ENCODE measurements at regions of chrX and their contacts with region 1.

Region 1: DNA sequence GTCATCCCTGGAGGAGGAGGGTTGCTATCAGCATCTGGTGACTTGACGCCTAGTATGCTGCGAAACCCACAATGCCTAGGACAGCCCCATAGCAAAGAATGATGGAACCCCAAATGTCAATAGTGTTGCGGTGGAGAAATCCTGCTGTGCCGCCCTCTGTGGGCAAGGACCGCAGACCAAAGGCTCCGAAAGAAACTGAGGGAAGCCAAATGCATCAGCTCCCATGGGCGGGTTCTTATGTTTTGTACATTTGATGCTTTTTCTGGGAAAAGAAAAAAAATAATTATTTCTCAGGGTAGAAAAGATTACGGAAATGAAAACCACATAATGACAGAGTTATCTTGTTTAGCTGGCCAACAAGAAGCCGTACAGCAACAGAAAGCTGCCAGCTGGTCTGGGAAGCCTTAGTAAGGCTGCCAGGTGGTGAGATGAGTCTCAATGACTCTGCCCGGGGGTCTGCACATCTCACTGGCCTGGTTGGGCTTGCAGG is 95.0 kb upstream of the TBL1X start:
- DNase-seq: no peak
- H3K4me3 ChIP-seq: no peak overlapping the region
- H3K27ac ChIP-seq: no peak overlapping the region
- H3K4me1 ChIP-seq: no peaks in the 10 kb centered on the region
- H3K27me3 ChIP-seq: no peaks in the 10 kb centered on the region
- CTCF ChIP-seq: no peak
- POLR2A ChIP-seq: no peak

Region 2: DNA sequence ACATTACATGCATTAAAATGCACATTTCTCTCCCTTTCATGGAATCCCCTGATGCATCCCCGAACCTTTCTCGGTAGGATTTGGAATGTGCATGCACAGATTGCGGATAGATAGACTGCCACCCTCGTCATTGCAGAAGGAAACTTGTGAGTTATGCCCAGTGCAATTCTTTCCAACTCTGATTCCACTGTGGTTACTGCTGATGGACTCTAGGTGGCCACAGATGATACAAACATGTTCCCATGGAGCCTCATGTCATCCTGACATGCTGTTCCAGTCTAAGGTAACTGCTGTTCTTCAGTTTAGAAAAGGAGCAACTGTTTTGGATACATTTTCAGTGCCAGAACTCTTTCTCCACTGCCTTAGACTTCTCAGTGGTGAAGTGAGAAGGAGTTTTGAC is 914.3 kb before region 1 on chrX:
- intact Hi-C with region 1: no loop called
- DNase-seq: no peak
- H3K4me3 ChIP-seq: no peak overlapping the region
- H3K27ac ChIP-seq: no peak overlapping the region
- H3K4me1 ChIP-seq: no peaks in the 10 kb centered on the region
- H3K27me3 ChIP-seq: no peaks in the 10 kb centered on the region
- CTCF ChIP-seq: no peak
- POLR2A ChIP-seq: no peak

Region 3: GRCh38 chrX:9440116-9440844 is 70.4 kb after region 1 on chrX:
- intact Hi-C with region 1: loop called (anchors 10 kb)
- DNase-seq: peak in 1 of 2 donors; percentile 34
- H3K4me3 ChIP-seq: no peak overlapping the region
- H3K27ac ChIP-seq: peak overlapping the region; percentile 69 to 79
- H3K4me1 ChIP-seq: no peaks in the 10 kb centered on the region
- H3K27me3 ChIP-seq: no peaks in the 10 kb centered on the region
- CTCF ChIP-seq: no peak
- POLR2A ChIP-seq: no peak

Region 4: DNA sequence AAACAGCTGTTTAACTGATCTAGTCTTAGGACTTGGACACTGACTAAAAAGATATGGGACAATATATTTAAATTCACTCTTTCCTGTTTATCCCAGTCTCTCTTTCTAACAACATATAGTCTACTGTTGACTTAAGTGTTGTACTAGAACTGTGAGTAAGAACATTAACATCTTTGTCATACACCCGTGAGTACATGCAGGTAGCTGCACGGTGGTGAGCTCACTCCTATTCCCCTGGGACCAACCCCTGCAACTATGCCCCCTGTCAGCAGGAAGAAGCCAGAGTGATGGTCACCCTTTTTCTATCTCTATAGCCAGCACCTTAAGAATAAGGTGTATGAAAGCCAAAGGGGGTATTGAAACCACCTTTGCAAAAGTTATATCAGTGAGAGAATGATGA is 112.6 kb after region 1 on chrX:
- intact Hi-C with region 1: no loop called
- DNase-seq: no peak
- H3K4me3 ChIP-seq: no peak overlapping the region
- H3K27ac ChIP-seq: no peak overlapping the region
- H3K4me1 ChIP-seq: no peaks in the 10 kb centered on the region
- H3K27me3 ChIP-seq: no peaks in the 10 kb centered on the region
- CTCF ChIP-seq: no peak
- POLR2A ChIP-seq: no peak

Measured in uterus (tissue), 4 donors.